ENCODE measurements at regions of chr6 and their contacts with region 1.

Region 1: DNA sequence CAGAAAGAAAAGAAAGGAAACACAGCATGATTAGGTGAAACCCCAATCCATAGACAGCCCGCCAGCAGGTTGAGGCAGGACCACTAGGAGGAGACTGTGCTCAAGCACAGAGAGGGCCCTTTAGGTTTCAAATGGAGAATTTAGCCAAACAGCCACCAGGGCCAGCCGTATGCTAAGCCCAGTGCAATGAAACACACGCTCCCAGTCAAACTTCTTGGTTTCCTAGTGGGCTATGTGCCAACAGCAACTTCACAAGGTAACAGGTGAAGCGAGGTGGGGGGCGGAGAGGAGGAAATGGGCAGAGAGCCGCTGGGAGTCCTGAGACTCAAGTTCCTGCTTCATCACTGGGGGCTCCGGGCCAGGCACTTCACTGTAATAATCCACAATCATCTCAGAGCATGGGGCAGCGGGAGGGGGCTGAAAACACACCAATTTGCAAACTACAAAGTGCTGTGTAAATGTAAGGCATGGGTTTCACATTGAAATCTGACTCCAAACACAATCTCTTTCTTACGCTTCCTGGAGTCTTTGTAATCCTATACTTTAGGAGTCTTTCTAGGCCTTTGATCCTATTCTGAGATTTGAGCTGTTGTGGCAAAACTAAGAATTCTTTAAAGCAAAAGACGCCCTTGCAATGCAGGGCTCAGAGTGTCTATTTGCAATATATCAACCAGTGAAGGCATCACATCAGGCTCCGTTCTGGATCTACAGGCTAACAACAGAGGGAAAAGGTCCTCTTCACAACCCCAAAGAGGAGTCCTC is 117.3 kb downstream of the OPRM1 start:
- DNase-seq: peak; percentile 34 to 82
- ATAC-seq: peak; percentile 88 to 92 (median 88)
- H3K4me3 ChIP-seq: no peak overlapping the region
- H3K4me3 Mint-ChIP-seq: peak overlapping the region; percentile 71
- H3K27ac ChIP-seq: peak overlapping the region; percentile 66
- H3K27ac Mint-ChIP-seq: peak overlapping the region; percentile 84 to 89
- H3K4me1 ChIP-seq: peaks cover 27% of the 10 kb centered on the region
- H3K4me1 Mint-ChIP-seq: peaks cover 32 to 34% of the 10 kb centered on the region in 2 donors
- H3K27me3 ChIP-seq: no peaks in the 10 kb centered on the region
- H3K27me3 Mint-ChIP-seq: no peaks in the 10 kb centered on the region
- CTCF ChIP-seq: peak; percentile 67

Region 2: GRCh38 chr6:154187203-154187602 is 30.9 kb after region 1 on chr6:
- intact Hi-C with region 1: no loop called
- DNase-seq: no peak
- ATAC-seq: no peak
- H3K4me3 ChIP-seq: no peak overlapping the region
- H3K4me3 Mint-ChIP-seq: no peak overlapping the region
- H3K27ac ChIP-seq: no peak overlapping the region
- H3K27ac Mint-ChIP-seq: peak overlapping the region; percentile 21 to 63
- H3K4me1 ChIP-seq: no peaks in the 10 kb centered on the region
- H3K4me1 Mint-ChIP-seq: peaks cover 40 to 44% of the 10 kb centered on the region in 2 donors
- H3K27me3 ChIP-seq: no peaks in the 10 kb centered on the region
- H3K27me3 Mint-ChIP-seq: no peaks in the 10 kb centered on the region
- CTCF ChIP-seq: no peak

Region 3: GRCh38 chr6:154197196-154197860 is 41.0 kb after region 1 on chr6:
- intact Hi-C with region 1: no loop called
- DNase-seq: no peak
- ATAC-seq: no peak
- H3K4me3 ChIP-seq: no peak overlapping the region
- H3K4me3 Mint-ChIP-seq: no peak overlapping the region
- H3K27ac ChIP-seq: no peak overlapping the region
- H3K27ac Mint-ChIP-seq: peak overlapping the region in 1 of 2 donors; percentile 22
- H3K4me1 ChIP-seq: no peaks in the 10 kb centered on the region
- H3K4me1 Mint-ChIP-seq: peaks cover 39 to 47% of the 10 kb centered on the region in 2 donors
- H3K27me3 ChIP-seq: no peaks in the 10 kb centered on the region
- H3K27me3 Mint-ChIP-seq: no peaks in the 10 kb centered on the region
- CTCF ChIP-seq: no peak

Region 4: GRCh38 chr6:154276810-154277628 is 120.7 kb after region 1 on chr6:
- intact Hi-C with region 1: loop called (anchors 1 kb)
- DNase-seq: peak in 1 of 2 donors; percentile 79
- ATAC-seq: peak; percentile 70 to 92 (median 86)
- H3K4me3 ChIP-seq: peak overlapping the region; percentile 17
- H3K4me3 Mint-ChIP-seq: peak overlapping the region; percentile 80
- H3K27ac ChIP-seq: no peak overlapping the region
- H3K27ac Mint-ChIP-seq: peak overlapping the region in 1 of 2 donors; percentile 76
- H3K4me1 ChIP-seq: peaks cover 8% of the 10 kb centered on the region
- H3K4me1 Mint-ChIP-seq: peaks cover 15 to 16% of the 10 kb centered on the region in 2 donors
- H3K27me3 ChIP-seq: no peaks in the 10 kb centered on the region
- H3K27me3 Mint-ChIP-seq: no peaks in the 10 kb centered on the region
- CTCF ChIP-seq: peak; percentile 80

Region 5: GRCh38 chr6:154371281-154371680 is 215.0 kb after region 1 on chr6:
- intact Hi-C with region 1: loop called (anchors 1 kb)
- DNase-seq: no peak
- ATAC-seq: no peak
- H3K4me3 ChIP-seq: no peak overlapping the region
- H3K4me3 Mint-ChIP-seq: no peak overlapping the region
- H3K27ac ChIP-seq: no peak overlapping the region
- H3K27ac Mint-ChIP-seq: no peak overlapping the region
- H3K4me1 ChIP-seq: no peaks in the 10 kb centered on the region
- H3K4me1 Mint-ChIP-seq: no peaks in the 10 kb centered on the region
- H3K27me3 ChIP-seq: no peaks in the 10 kb centered on the region
- H3K27me3 Mint-ChIP-seq: peaks cover 0 to 11% of the 10 kb centered on the region in 2 donors
- CTCF ChIP-seq: no peak